Gastrocnemius medialis (tissue), 4 donors: ENCODE measurements at regions of chr4 and their contacts with region 1.

Region 1: GRCh38 chr4:73662709-73663546 is 42.7 kb upstream of the RASSF6 start:
- DNase-seq: no peak
- ATAC-seq: peak in 1 of 2 donors; percentile 52
- H3K4me3 ChIP-seq: no peak overlapping the region
- H3K27ac ChIP-seq: no peak overlapping the region
- H3K4me1 ChIP-seq: no peaks in the 10 kb centered on the region
- H3K27me3 ChIP-seq: no peaks in the 10 kb centered on the region
- CTCF ChIP-seq: peak; percentile 16 to 49 (median 32)
- POLR2A ChIP-seq: no peak

Region 2: GRCh38 chr4:73869130-73870050 is 206.5 kb after region 1 on chr4 and contains the start of gene CXCL1:
- in situ Hi-C with region 1: no loop called
- intact Hi-C with region 1: loop called (anchors 10 kb)
- DNase-seq: no peak
- ATAC-seq: peak; percentile 25 to 30
- H3K4me3 ChIP-seq: peak within 1 kb of the TSS; percentile 44 to 59 (median 56)
- H3K27ac ChIP-seq: peak within 1 kb of the TSS in 2 of 4 donors; percentile 35 to 50
- H3K4me1 ChIP-seq: no peaks in the 10 kb centered on the region
- H3K27me3 ChIP-seq: peaks cover 4 to 5% (median 4%) of the 10 kb centered on the region in 3 donors
- CTCF ChIP-seq: no peak
- POLR2A ChIP-seq: no peak
- total RNA-seq, gene CXCL1: 2.7 to 3.2 TPM in 2 of 4 donors, not detected in the others

Region 3: GRCh38 chr4:73922766-73923630 is 260.1 kb after region 1 on chr4:
- in situ Hi-C with region 1: loop called in 1 of 4 experiments (anchors 10 kb)
- intact Hi-C with region 1: loop called (anchors 5 kb)
- DNase-seq: no peak
- ATAC-seq: no peak
- H3K4me3 ChIP-seq: no peak overlapping the region
- H3K27ac ChIP-seq: no peak overlapping the region
- H3K4me1 ChIP-seq: no peaks in the 10 kb centered on the region
- H3K27me3 ChIP-seq: no peaks in the 10 kb centered on the region
- CTCF ChIP-seq: peak in 2 of 5 experiments; percentile 20 to 24
- POLR2A ChIP-seq: no peak

Region 4: GRCh38 chr4:74038161-74039064 is 375.5 kb after region 1 on chr4 and contains the start of gene CXCL3:
- in situ Hi-C with region 1: no loop called
- intact Hi-C with region 1: loop called (anchors 10 kb)
- DNase-seq: peak; percentile 11 to 37
- ATAC-seq: peak; percentile 72
- H3K4me3 ChIP-seq: peak within 1 kb of the TSS; percentile 62 to 78 (median 68)
- H3K27ac ChIP-seq: peak within 1 kb of the TSS; percentile 59 to 74 (median 70)
- H3K4me1 ChIP-seq: no peaks in the 10 kb centered on the region
- H3K27me3 ChIP-seq: peaks cover 0 to 20% (median 0%) of the 10 kb centered on the region in 3 donors
- CTCF ChIP-seq: peak; percentile 9 to 39 (median 28)
- POLR2A ChIP-seq: peak in 1 of 2 donors; percentile 27
- total RNA-seq, gene CXCL3: 0.84 TPM in 1 of 4 donors, not detected in the others